ENCODE measurements at regions of chr5 and their contacts with region 1.

Region 1: DNA sequence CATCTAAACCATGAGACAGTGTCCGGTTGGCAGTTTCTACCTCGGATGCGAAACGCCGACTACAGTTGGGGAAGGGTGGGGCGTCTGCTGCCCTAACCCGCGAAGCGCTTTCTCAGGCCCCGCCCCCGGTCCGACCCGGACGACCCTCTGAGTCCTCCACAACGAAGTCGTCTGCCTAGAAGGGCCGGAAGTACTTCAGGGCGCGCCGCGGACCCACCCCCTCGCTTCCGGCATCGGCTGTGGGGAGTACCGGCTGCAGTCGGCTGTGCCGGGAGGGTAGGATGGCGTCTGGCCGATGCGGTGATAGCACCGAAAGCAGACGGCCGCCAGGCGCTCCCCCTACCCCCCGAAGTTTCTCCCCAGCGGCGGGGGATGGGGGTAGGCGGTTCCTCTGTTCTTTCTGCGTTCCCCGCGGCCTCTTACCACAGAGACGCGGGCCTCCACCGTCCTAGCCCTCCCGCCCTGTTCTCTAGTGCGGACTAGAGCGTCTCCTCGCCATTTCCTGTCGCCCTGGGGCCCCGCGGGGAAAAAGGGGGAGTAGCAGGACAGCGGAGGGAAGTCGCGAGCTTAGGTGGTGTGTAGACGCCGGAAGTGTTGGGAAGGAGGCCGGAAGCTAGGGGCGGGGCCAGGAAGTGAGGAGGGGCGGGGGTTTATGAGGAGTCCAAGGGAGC is at the start of gene TRIM41:
- DNase-seq: peak; percentile 96 to 99 (median 98)
- H3K4me3 ChIP-seq: peak within 1 kb of the TSS; percentile 59 to 99 (median 88)
- H3K27ac ChIP-seq: peak within 1 kb of the TSS; percentile 78 to 100 (median 98)
- H3K27me3 ChIP-seq: no peaks in the 10 kb centered on the region
- CTCF ChIP-seq: peak in 13 of 56 donors; percentile 8 to 37 (median 17)
- total RNA-seq, gene TRIM41: 33.1 to 102 (median 48.0) TPM

Region 2: DNA sequence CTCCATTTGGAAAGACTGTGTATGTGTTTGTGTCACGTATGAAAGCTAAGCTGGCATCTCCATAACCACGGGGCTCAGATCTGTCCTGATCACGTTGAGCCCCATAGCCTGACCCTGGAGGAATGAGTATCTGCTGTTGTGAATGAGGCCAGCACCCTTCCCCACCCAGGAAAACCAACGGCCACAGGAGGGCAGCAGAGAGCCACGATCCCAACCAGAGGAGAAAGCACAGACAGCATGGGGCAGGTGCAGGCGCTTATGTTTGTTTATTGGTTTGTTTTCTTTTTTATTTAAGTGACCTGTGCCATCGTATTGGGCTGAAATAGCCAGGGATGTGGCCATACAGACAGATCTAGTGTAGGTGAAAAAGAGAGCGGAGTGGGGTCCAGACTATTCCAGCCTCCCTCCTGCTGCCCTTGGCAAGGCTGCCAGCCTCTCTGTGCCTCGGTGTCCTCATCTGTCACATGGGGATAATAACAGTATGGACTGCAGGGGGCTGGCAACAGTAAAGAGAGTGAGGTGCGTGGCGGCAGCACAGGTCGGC is 63.8 kb before region 1 on chr5:
- intact Hi-C with region 1: loop called in 1 of 2 experiments (anchors 2 kb)
- DNase-seq: peak; percentile 75 to 91 (median 90)
- H3K4me3 ChIP-seq: peak overlapping the region in 2 of 59 donors; percentile 1 to 20
- H3K27ac ChIP-seq: peak overlapping the region in 37 of 59 donors; percentile 57 to 97 (median 92)
- H3K27me3 ChIP-seq: peaks cover 0 to 7% (median 0%) of the 10 kb centered on the region in 45 donors
- CTCF ChIP-seq: peak; percentile 62 to 94 (median 86)

Region 3: DNA sequence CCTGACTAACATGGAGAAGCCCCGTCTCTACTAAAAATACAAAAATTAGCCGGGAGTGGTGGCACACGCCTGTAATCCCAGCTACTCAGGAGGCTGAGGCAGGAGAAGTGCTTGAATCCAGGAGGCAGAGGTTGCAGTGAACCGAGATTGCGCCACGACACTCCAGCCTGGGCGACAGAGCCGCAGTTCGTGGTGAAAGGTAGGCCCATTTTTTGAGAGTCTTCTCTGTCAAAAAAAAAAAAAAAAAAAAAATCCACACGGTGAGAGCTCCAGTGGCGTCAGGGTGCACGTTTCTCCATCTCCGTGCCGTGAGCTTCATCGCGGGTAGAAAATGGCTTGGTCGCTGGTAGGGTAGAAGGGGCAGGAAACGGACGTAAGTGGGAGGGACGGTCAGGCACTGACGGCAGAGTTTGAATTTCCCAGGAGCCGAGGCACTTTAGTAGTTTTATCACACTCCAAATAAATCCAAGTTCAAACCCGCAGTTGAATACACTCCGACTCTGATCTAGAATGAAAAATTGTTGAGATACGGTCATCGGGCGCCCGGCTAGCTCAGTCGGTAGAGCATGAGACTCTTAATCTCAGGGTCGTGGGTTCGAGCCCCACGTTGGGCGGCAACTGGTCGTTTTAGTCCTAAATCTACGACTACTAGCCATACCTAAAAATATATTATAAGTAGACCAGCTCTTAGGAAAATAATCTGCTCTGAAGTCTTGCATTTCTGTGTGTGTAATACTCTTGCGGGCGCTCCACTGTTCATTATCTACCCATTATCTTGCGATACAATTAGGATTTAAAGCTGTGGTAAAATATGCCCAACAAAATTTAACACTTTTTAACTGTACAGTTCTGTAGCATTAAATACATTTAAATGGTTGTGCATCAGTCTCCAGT is 15.7 kb before region 1 on chr5:
- intact Hi-C with region 1: loop called (anchors 1 kb)
- DNase-seq: peak; percentile 66 to 88 (median 79)
- H3K4me3 ChIP-seq: peak overlapping the region; percentile 43 to 80 (median 69)
- H3K27ac ChIP-seq: peak overlapping the region in 56 of 59 donors; percentile 9 to 90 (median 77)
- H3K27me3 ChIP-seq: no peaks in the 10 kb centered on the region
- CTCF ChIP-seq: peak in 2 of 56 donors; percentile 5 to 6

Region 4: DNA sequence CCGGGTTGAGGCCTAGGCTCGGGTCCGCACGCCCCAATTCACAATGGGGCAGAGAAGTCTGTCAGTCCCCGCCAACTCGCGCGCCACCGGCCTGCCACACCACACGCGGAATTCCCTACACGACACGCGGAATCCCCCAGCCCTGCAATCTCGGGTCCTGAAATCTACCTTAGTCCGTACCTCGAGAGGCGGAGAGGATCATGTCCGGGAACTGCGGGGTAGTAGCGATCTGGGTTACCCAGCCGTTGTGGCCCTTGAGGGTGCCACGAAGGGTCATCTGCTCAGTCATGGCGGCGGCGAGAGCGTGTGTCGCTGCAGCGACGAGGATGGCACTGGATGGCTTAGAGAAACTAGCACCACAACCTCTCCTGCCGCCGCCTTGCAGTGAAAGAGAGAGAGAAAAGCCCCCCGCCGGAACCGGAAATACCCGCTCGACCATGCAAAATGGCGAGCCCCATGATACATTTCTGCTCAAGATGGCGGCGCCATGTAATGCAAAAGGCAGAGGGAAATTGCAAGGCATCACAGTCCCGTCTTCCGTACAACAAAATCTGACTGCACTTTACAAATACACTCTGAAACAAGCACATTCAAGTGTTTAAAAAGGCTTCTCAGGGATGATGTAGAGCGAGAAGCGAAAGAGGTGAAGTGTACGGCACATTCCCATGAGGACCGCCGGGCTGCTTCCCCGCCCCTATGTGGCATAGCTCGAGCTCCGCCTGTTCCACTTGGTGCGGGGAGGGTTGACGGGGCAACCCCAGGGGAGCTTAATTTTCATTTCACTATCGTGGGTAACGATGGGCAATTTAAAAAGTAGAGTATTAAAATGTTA is 20.5 kb after region 1 on chr5 and contains the start of gene RACK1:
- intact Hi-C with region 1: loop called (anchors 1 kb)
- DNase-seq: peak; percentile 81 to 94 (median 91)
- H3K4me3 ChIP-seq: peak within 1 kb of the TSS; percentile 60 to 96 (median 84)
- H3K27ac ChIP-seq: peak within 1 kb of the TSS; percentile 51 to 99 (median 97)
- H3K27me3 ChIP-seq: no peaks in the 10 kb centered on the region
- CTCF ChIP-seq: peak in 23 of 56 donors; percentile 7 to 42 (median 22)
- total RNA-seq, gene RACK1: 308 to 570 (median 390) TPM

Region 5: DNA sequence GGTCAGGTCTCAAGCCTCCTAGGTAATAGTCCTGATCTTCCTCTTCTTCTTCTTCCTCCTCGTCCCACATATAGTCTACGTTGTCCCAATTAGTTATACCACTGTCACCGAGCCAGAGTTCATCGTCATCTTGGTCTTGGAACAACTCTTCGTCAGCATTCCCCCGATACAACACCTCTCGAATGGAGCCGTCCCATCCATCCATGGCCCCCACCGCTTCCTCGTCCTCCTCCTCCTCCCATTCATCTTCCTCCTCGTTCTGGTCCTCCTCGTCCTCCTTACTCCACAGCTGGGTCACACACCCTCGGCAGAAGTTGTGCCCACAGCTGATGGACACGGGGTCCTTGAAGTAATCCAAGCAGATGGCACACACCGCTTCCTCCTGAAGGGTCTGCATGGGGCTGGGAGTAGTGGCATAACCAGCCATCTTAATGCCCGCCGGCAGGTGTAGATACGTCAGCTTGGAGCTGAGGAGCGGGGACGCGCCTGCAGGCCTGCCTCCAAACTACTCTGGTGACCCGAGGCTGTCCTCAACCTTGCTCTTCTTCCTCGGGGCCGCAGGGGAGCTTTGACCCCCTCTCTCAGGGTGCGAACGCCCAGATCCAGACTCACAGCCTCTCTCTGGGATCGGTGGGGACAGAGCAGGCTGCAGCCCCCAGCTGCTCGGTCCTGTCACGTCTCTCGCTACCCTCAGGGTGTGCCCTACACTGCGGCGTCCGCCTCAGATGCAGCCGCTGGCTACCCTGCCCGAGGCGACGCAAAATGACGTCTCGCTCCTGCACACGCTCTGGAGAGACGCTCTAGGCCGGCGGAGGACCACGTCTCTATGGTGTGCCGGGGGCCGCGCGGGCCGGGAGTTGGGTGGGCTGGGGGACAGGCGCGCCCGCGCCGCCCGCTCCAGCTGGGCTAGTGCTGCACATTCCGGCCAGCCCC is 37.5 kb after region 1 on chr5 and contains the start of gene TRIM52:
- intact Hi-C with region 1: loop called (anchors 1 to 5 kb)
- DNase-seq: peak; percentile 84 to 95 (median 92)
- H3K4me3 ChIP-seq: peak within 1 kb of the TSS; percentile 64 to 100 (median 95)
- H3K27ac ChIP-seq: peak within 1 kb of the TSS; percentile 75 to 99 (median 94)
- H3K27me3 ChIP-seq: no peaks in the 10 kb centered on the region
- CTCF ChIP-seq: peak in 14 of 56 donors; percentile 10 to 37 (median 19)
- total RNA-seq, gene TRIM52: 19.8 to 50.9 (median 31.6) TPM

Measured in dorsolateral prefrontal cortex (tissue), 120 donors.